Naive thymus-derived CD4-positive, alpha-beta T cell (primary cell): ENCODE measurements at regions of chr11 and their contacts with region 1.

Region 1: DNA sequence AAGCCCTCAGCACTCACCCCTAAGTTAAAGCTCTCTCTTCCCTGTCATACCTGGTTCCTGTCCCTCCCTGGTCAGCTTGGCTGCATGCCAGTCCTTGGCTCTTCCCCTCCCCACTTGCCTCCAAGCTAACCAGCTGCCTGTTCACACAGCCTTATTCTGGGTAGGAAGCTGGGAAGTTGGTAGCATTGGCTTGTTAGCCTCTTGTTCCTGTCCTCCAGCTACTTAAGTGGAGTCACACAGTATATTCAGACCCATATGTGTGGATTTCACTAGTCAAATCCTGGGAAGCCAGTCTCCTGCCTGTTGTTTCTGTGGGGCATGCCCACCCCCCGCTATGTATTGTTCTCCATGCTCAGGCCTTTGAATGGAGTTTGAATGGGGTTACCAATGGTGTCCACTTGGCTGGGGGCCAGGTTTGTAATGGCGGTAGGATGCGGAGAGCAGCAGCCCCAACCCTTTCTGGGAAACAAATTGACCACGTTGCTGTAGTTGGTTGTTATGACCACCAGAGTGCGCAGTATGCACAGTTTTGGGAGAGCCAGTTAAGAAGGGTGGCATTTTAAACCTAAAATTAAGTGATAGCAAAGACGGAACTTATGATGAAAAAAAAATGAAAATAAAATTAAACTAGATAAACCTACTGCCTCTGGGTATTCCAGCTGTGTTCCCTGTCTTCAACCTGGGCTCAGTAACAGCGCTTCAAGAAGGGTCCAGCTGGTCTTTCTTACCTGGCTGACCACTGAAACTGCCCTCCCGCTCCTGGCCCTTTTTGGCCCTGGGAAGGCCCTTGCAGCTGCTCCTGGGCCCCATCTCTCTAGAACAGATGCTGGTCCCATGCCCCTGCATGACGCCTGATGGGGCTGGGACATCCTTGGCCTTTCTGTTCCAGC is 10.7 kb upstream of the RPS3 start:
- DNase-seq: peak; percentile 23 to 74 (median 64)
- ATAC-seq: peak; percentile 92
- H3K4me3 ChIP-seq: no peak overlapping the region
- H3K4me3 Mint-ChIP-seq: no peak overlapping the region
- H3K27ac ChIP-seq: no peak overlapping the region
- H3K27ac Mint-ChIP-seq: no peak overlapping the region
- H3K4me1 ChIP-seq: peaks cover 5 to 10% of the 10 kb centered on the region in 2 donors
- H3K4me1 Mint-ChIP-seq: peaks cover 10 to 13% (median 12%) of the 10 kb centered on the region in 7 donors
- H3K27me3 ChIP-seq: no peaks in the 10 kb centered on the region
- H3K27me3 Mint-ChIP-seq: peaks cover 0 to 22% (median 0%) of the 10 kb centered on the region in 5 donors

Region 2: DNA sequence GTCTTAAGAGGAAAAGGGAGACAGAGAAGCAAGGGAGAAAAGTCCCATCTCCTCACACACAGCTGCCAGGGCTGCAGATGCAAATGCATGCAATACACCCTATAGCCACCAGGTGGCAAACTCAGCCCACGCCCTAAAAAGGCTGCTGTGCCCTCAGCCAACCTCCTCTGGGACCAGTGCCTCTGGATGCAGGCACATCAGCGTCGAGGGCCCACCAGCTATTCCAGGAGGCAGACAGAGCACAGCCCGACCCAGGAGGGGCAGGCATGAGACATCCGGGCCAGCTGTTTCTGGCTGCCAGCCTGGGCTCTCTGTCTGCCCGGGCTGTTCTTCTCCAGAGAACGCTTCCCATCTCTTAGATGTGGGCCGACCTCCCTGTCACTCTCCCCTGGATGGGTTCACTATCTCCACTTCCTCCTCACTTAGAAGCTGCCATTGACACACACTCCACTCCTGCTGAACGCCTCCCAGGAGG is 108.4 kb before region 1 on chr11:
- CTCF ChIA-PET with region 1: interaction called, 416 read pairs
- POLR2A ChIA-PET with region 1: interaction called, 119 read pairs
- intact Hi-C with region 1: loop called (anchors 1 kb)
- DNase-seq: peak; percentile 56 to 83 (median 69)
- ATAC-seq: peak; percentile 78
- H3K4me3 ChIP-seq: no peak overlapping the region
- H3K4me3 Mint-ChIP-seq: peak overlapping the region in 5 of 10 donors; percentile 16 to 65 (median 60)
- H3K27ac ChIP-seq: no peak overlapping the region
- H3K27ac Mint-ChIP-seq: peak overlapping the region; percentile 79 to 99 (median 91)
- H3K4me1 ChIP-seq: peaks cover 27 to 46% of the 10 kb centered on the region in 2 donors
- H3K4me1 Mint-ChIP-seq: peaks cover 34 to 57% (median 47%) of the 10 kb centered on the region in 7 donors
- H3K27me3 ChIP-seq: no peaks in the 10 kb centered on the region
- H3K27me3 Mint-ChIP-seq: no peaks in the 10 kb centered on the region

Region 3: GRCh38 chr11:75342903-75343870 is 45.4 kb before region 1 on chr11:
- CTCF ChIA-PET with region 1: interaction called, 12 read pairs
- POLR2A ChIA-PET with region 1: interaction called, 14 read pairs
- intact Hi-C with region 1: loop called in 1 of 2 experiments (anchors 5 kb)
- DNase-seq: no peak
- ATAC-seq: no peak
- H3K4me3 ChIP-seq: no peak overlapping the region
- H3K4me3 Mint-ChIP-seq: peak overlapping the region in 8 of 10 donors; percentile 6 to 84 (median 40)
- H3K27ac ChIP-seq: peak overlapping the region; percentile 31
- H3K27ac Mint-ChIP-seq: peak overlapping the region; percentile 30 to 98 (median 84)
- H3K4me1 ChIP-seq: peaks cover 35 to 93% of the 10 kb centered on the region in 2 donors
- H3K4me1 Mint-ChIP-seq: peaks cover 84 to 100% (median 98%) of the 10 kb centered on the region in 7 donors
- H3K27me3 ChIP-seq: no peaks in the 10 kb centered on the region
- H3K27me3 Mint-ChIP-seq: no peaks in the 10 kb centered on the region

Region 4: DNA sequence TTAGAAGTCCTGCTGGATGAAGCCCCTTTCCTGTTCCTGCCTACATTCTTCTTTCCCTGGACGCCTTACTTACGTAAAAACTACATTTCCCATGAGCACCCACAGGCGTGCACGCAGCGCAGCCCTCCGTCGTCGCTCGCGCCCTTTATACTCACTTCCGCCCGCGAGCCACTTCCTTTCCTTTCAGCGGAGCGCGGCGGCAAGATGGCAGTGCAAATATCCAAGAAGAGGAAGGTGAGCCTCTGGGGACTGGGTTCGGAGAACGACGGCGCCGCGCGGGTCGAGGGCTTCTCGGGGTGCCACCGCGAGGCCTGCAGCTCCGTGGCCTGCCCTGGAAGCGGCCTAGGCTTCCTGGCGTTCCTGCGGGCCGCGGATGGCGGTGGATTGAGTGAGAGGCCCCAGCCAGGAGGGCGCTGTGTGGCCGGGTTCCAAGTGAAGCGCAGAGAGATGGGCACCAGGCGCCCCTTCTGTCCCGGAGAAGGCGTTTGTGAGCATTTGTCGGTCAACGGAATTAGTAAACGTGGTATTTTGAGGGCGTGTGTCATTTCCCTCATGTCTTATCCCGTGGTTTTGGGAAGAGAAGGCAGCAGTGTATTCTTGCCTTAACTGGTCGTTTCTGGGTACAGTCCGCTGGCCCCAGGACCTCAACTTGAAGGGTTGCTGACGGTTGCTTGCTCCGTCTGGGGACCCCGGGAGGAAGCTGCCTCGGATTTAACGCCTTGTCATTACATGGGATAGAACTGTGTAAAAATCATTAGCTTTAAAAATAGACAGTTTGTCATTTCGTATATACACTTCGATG is 10.9 kb after region 1 on chr11 and contains the start of gene RPS3:
- CTCF ChIA-PET with region 1: interaction called, 8 read pairs
- POLR2A ChIA-PET with region 1: interaction called, 15 read pairs
- intact Hi-C with region 1: loop called in 1 of 2 experiments (anchors 1 kb)
- DNase-seq: peak; percentile 81 to 91 (median 88)
- ATAC-seq: peak; percentile 96
- H3K4me3 ChIP-seq: peak within 1 kb of the TSS; percentile 80
- H3K4me3 Mint-ChIP-seq: peak within 1 kb of the TSS; percentile 87 to 99 (median 94)
- H3K27ac ChIP-seq: peak within 1 kb of the TSS; percentile 86
- H3K27ac Mint-ChIP-seq: peak within 1 kb of the TSS; percentile 94 to 99 (median 96)
- H3K4me1 ChIP-seq: peaks cover 16 to 17% of the 10 kb centered on the region in 2 donors
- H3K4me1 Mint-ChIP-seq: peaks cover 20 to 54% (median 48%) of the 10 kb centered on the region in 7 donors
- H3K27me3 ChIP-seq: no peaks in the 10 kb centered on the region
- H3K27me3 Mint-ChIP-seq: peaks cover 0 to 11% (median 0%) of the 10 kb centered on the region in 5 donors
- total RNA-seq, gene RPS3: 3,135 to 5,501 (median 5,089) TPM

Region 5: DNA sequence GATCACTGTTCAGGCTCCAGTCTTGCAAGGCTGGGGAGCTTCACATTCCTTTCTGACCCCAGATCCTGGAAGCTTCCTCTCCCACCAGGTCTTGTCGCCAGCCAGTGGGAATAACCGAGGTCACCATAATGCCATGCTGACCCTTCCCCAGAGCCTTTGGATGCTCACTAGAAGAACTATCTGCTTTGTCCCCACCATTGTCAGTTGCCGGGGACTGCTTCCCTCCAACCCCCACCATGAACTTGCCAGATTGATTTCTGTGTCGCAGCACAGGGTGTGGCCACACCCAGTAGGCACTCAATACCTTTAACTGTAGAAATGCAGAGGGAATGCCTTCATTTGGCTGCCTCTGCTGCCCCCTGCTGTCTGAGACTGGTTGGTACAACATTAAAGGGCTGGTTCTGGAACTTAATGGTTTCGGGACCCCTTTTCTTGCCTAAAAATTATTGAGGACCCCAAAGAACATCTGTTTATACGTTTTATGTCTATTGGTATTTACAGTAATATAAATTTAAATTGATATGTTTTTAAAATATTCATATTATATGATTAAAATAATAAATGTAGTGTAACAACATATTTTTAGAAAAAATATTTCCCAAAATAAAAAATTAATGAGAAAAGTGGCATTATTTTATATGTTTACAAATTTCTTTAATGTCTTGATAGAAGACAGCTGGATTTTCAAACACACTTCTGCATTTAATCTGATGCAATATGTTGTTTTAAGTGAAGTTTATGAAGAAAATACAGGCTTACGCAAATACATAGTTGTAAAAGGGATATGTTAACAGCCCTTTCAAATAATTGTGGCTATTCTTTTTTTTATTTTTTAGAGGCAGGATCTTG is 143.8 kb after region 1 on chr11:
- CTCF ChIA-PET with region 1: interaction called, 93 read pairs
- POLR2A ChIA-PET with region 1: interaction called, 3 read pairs
- intact Hi-C with region 1: loop called (anchors 1 kb)
- DNase-seq: peak; percentile 63 to 83 (median 76)
- ATAC-seq: peak; percentile 91
- H3K4me3 ChIP-seq: no peak overlapping the region
- H3K4me3 Mint-ChIP-seq: peak overlapping the region in 3 of 10 donors; percentile 1 to 59 (median 41)
- H3K27ac ChIP-seq: no peak overlapping the region
- H3K27ac Mint-ChIP-seq: peak overlapping the region in 4 of 9 donors; percentile 11 to 83 (median 62)
- H3K4me1 ChIP-seq: peaks cover 5 to 14% of the 10 kb centered on the region in 2 donors
- H3K4me1 Mint-ChIP-seq: peaks cover 8 to 61% (median 22%) of the 10 kb centered on the region in 7 donors
- H3K27me3 ChIP-seq: no peaks in the 10 kb centered on the region
- H3K27me3 Mint-ChIP-seq: peaks cover 0 to 7% (median 0%) of the 10 kb centered on the region in 5 donors

Region 6: GRCh38 chr11:75721855-75722668 is 333.4 kb after region 1 on chr11:
- CTCF ChIA-PET with region 1: no interaction called
- POLR2A ChIA-PET with region 1: no interaction called
- intact Hi-C with region 1: no loop called
- DNase-seq: no peak
- ATAC-seq: no peak
- H3K4me3 ChIP-seq: no peak overlapping the region
- H3K4me3 Mint-ChIP-seq: no peak overlapping the region
- H3K27ac ChIP-seq: no peak overlapping the region
- H3K27ac Mint-ChIP-seq: no peak overlapping the region
- H3K4me1 ChIP-seq: no peaks in the 10 kb centered on the region
- H3K4me1 Mint-ChIP-seq: peaks cover 0 to 5% (median 0%) of the 10 kb centered on the region in 7 donors
- H3K27me3 ChIP-seq: no peaks in the 10 kb centered on the region
- H3K27me3 Mint-ChIP-seq: peaks cover 0 to 1% (median 0%) of the 10 kb centered on the region in 5 donors